ENCODE measurements at regions of chr16 and their contacts with region 1.

Region 1: GRCh38 chr16:4253394-4254150 is 11.7 kb upstream of the SRL start:
- DNase-seq: peak; percentile 98 to 100 (median 100)
- H3K4me3 ChIP-seq: peak overlapping the region; percentile 57 to 85
- H3K4me3 Mint-ChIP-seq: peak overlapping the region; percentile 90 to 96 (median 93)
- H3K27ac ChIP-seq: peak overlapping the region; percentile 86
- H3K27ac Mint-ChIP-seq: peak overlapping the region; percentile 91 to 97 (median 96)
- H3K4me1 ChIP-seq: peaks cover 9% of the 10 kb centered on the region
- H3K4me1 Mint-ChIP-seq: peaks cover 5 to 10% (median 8%) of the 10 kb centered on the region in 4 donors
- H3K27me3 ChIP-seq: no peaks in the 10 kb centered on the region
- H3K27me3 Mint-ChIP-seq: no peaks in the 10 kb centered on the region

Region 2: GRCh38 chr16:3880623-3881498 is 372.7 kb before region 1 on chr16 and contains the start of gene CREBBP:
- CTCF ChIA-PET with region 1: interaction called, 4 read pairs
- POLR2A ChIA-PET with region 1: interaction called, 5 read pairs
- intact Hi-C with region 1: loop called (anchors 1 kb)
- DNase-seq: peak; percentile 81 to 91 (median 87)
- H3K4me3 ChIP-seq: peak within 1 kb of the TSS; percentile 58 to 74
- H3K4me3 Mint-ChIP-seq: peak within 1 kb of the TSS; percentile 85 to 98 (median 92)
- H3K27ac ChIP-seq: peak within 1 kb of the TSS; percentile 71
- H3K27ac Mint-ChIP-seq: peak within 1 kb of the TSS; percentile 87 to 95 (median 93)
- H3K4me1 ChIP-seq: peaks cover 43% of the 10 kb centered on the region
- H3K4me1 Mint-ChIP-seq: peaks cover 31 to 46% (median 37%) of the 10 kb centered on the region in 4 donors
- H3K27me3 ChIP-seq: no peaks in the 10 kb centered on the region
- H3K27me3 Mint-ChIP-seq: peaks cover 3 to 5% of the 10 kb centered on the region in 2 donors
- total RNA-seq, gene CREBBP: 119 to 133 TPM

Region 3: DNA sequence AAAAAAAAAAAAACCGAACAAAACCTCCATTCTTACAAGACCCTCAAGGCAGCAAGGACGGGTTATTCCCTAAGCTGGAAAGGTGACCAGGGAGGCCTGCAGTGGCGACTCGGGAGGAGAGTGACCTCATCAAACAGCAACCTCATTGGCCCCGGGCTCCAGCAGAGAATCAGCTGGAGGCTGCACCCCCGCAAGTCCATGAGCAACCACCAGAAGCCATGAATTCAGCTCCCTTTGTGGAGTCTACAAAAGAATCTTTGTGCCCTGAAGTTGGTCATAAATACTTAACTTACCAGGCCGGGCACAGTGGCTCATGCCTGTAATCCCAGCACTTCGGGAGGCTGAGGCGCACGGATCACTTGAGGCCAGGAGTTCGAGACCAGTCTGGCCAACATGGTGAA is 292.1 kb before region 1 on chr16:
- CTCF ChIA-PET with region 1: interaction called, 4 read pairs
- POLR2A ChIA-PET with region 1: interaction called, 9 read pairs
- intact Hi-C with region 1: loop called (anchors 1 kb)
- DNase-seq: no peak
- H3K4me3 ChIP-seq: peak overlapping the region in 1 of 2 donors; percentile 32
- H3K4me3 Mint-ChIP-seq: peak overlapping the region in 4 of 8 donors; percentile 89 to 94 (median 91)
- H3K27ac ChIP-seq: no peak overlapping the region
- H3K27ac Mint-ChIP-seq: peak overlapping the region; percentile 53 to 97 (median 93)
- H3K4me1 ChIP-seq: peaks cover 25% of the 10 kb centered on the region
- H3K4me1 Mint-ChIP-seq: peaks cover 13 to 35% (median 21%) of the 10 kb centered on the region in 4 donors
- H3K27me3 ChIP-seq: no peaks in the 10 kb centered on the region
- H3K27me3 Mint-ChIP-seq: peaks cover 7 to 8% of the 10 kb centered on the region in 2 donors

Region 4: GRCh38 chr16:4116337-4117249 is 137.0 kb before region 1 on chr16 and contains the start of gene ADCY9:
- CTCF ChIA-PET with region 1: interaction called, 5 read pairs
- POLR2A ChIA-PET with region 1: interaction called, 17 read pairs
- intact Hi-C with region 1: loop called (anchors 1 kb)
- DNase-seq: peak; percentile 75 to 85 (median 80)
- H3K4me3 ChIP-seq: peak within 1 kb of the TSS in 1 of 2 donors; percentile 57
- H3K4me3 Mint-ChIP-seq: peak within 1 kb of the TSS; percentile 83 to 94 (median 90)
- H3K27ac ChIP-seq: peak within 1 kb of the TSS; percentile 43
- H3K27ac Mint-ChIP-seq: peak within 1 kb of the TSS; percentile 53 to 94 (median 89)
- H3K4me1 ChIP-seq: peaks cover 45% of the 10 kb centered on the region
- H3K4me1 Mint-ChIP-seq: peaks cover 33 to 41% (median 37%) of the 10 kb centered on the region in 4 donors
- H3K27me3 ChIP-seq: no peaks in the 10 kb centered on the region
- H3K27me3 Mint-ChIP-seq: peaks cover 2% of the 10 kb centered on the region in 2 donors
- total RNA-seq, gene ADCY9: 7.8 to 8.1 TPM

Region 5: DNA sequence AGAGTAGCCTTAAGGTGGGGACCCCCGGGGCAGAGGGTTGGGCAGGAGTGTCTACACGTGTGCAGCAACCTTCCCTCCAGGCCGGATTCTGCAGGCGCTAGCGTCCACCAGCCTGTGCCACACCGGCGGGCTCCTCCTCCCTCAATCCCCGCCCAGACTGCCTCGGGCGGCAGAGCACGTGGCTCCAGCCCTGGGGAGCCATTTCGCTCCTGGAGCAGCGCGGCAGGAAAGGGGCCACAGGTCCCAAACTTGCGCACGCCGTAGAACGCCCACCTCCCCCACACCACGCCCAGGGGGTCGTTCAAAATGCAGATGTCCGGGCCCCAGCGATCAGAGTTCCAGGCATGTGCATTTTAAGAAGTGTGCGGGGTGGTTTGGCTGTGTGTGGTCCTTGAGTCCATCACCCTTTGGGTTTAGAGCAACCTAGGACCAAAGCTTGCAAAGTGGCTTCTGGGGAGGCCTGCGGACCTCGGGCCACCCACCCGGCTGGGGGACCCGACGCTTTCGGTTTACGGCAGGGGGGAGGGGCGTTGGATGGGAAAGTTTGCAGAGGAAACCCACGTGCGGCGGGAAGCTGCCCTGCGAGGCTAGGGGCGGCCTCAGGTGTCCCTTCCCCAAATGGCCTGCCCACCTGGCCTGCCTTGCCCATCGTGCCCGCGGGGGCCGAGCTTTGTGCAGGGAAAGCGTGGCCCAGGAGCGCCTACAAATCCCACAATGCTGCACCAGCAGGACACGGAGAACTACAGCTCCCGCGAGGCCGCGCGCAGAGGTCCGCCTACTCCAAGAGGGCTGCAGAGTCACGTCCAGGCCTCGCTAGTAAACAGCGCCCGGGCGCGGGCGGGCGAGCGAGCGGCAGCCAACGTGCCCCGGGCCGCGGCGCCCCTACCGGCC is 17.8 kb after region 1 on chr16:
- CTCF ChIA-PET with region 1: interaction called, 84 read pairs
- POLR2A ChIA-PET with region 1: interaction called, 109 read pairs
- intact Hi-C with region 1: loop called (anchors 1 kb)
- DNase-seq: peak; percentile 84 to 94 (median 85)
- H3K4me3 ChIP-seq: peak overlapping the region; percentile 48 to 91
- H3K4me3 Mint-ChIP-seq: peak overlapping the region; percentile 86 to 93 (median 91)
- H3K27ac ChIP-seq: peak overlapping the region; percentile 71
- H3K27ac Mint-ChIP-seq: peak overlapping the region; percentile 72 to 98 (median 91)
- H3K4me1 ChIP-seq: peaks cover 10% of the 10 kb centered on the region
- H3K4me1 Mint-ChIP-seq: peaks cover 6 to 27% (median 14%) of the 10 kb centered on the region in 4 donors
- H3K27me3 ChIP-seq: no peaks in the 10 kb centered on the region
- H3K27me3 Mint-ChIP-seq: no peaks in the 10 kb centered on the region

Region 6: GRCh38 chr16:4330277-4330874 is 76.8 kb after region 1 on chr16:
- CTCF ChIA-PET with region 1: interaction called, 6 read pairs
- POLR2A ChIA-PET with region 1: interaction called, 5 read pairs
- intact Hi-C with region 1: loop called (anchors 1 kb)
- DNase-seq: peak; percentile 59 to 71 (median 61)
- H3K4me3 ChIP-seq: no peak overlapping the region
- H3K4me3 Mint-ChIP-seq: no peak overlapping the region
- H3K27ac ChIP-seq: no peak overlapping the region
- H3K27ac Mint-ChIP-seq: peak overlapping the region in 1 of 7 donors; percentile 50
- H3K4me1 ChIP-seq: peaks cover 9% of the 10 kb centered on the region
- H3K4me1 Mint-ChIP-seq: peaks cover 0 to 5% (median 1%) of the 10 kb centered on the region in 4 donors
- H3K27me3 ChIP-seq: no peaks in the 10 kb centered on the region
- H3K27me3 Mint-ChIP-seq: no peaks in the 10 kb centered on the region